HepG2 (cell line): ENCODE measurements at regions of chr16 and their contacts with region 1.

Region 1: DNA sequence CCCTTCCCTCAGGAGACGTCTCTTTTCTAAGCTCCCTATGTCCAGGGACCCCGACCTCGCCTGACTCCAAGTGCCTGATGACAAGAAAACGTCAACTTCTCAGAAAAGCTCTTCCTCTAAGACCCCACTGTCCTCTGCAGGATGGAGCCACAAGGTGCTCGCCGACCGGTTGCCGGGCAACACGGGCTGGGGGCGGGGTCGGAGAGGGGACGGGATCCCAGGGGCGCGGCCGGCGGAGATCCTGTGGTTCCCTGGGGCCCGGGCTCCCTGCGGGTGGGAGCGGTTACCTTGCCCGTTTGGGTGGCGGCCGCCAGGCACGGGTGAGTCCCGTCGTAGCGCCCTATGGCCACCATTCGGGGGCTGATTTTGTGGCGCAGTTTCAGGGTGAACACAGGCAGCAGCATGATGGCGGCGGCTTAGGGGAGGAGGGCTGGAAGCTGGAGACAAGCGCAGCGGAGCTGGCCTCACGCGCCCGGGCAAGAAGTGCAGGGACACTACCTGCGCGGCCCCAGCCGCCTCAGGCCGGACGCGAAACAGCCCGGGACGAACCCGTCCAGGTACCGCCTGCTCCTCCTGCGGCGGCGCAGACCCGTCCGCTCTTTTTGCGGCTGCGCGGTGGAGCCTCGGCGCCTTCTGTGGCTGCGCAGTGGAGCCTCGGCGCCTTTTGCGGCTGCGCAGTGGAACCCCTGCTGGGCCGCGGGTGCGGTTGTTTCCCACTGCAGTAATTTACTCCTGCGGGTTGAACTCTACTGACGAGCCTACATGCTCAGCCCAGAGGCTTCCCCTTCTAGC is at the start of gene BBS2:
- DNase-seq: peak; percentile 87
- ATAC-seq: peak; percentile 98
- H3K4me3 ChIP-seq: peak within 1 kb of the TSS; percentile 71 to 95 (median 87)
- H3K27ac ChIP-seq: peak within 1 kb of the TSS; percentile 46
- H3K4me1 ChIP-seq: peaks cover 32% of the 10 kb centered on the region
- H3K27me3 ChIP-seq: no peaks in the 10 kb centered on the region; a peak in 1 of 5 replicates
- CTCF ChIP-seq: peak; percentile 27
- EP300 ChIP-seq: no peak
- POLR2A ChIP-seq: peak; percentile 68 to 98
- RAD21 ChIP-seq: peak; percentile 16; the same call in 1 of the 2 replicates
- total RNA-seq, gene BBS2: 59.7 and 63.5 TPM in 2 replicates

Region 2: GRCh38 chr16:56708525-56709442 is 189.1 kb after region 1 on chr16:
- CTCF ChIA-PET with region 1: no interaction called
- POLR2A ChIA-PET with region 1: no interaction called
- in situ Hi-C with region 1: loop called (anchors 10 kb)
- intact Hi-C with region 1: no loop called
- DNase-seq: no peak
- ATAC-seq: peak; percentile 59
- H3K4me3 ChIP-seq: 0 out of 6 replicates have a peak overlapping the region, but pooled peaks of 1 of the 3 experiments have one; percentile 11
- H3K27ac ChIP-seq: no peak overlapping the region
- H3K4me1 ChIP-seq: peaks cover 24% of the 10 kb centered on the region
- H3K27me3 ChIP-seq: peaks cover 5 to 13% of the 10 kb centered on the region in 2 experiments; a peak in 1 of 5 replicates
- CTCF ChIP-seq: no peak
- EP300 ChIP-seq: no peak
- POLR2A ChIP-seq: no peak
- RAD21 ChIP-seq: no peak